Panc1 (cell line): ENCODE measurements at regions of chr3 and their contacts with region 1.

Region 1: GRCh38 chr3:6644070-6644929 is 216.6 kb upstream of the GRM7 start:
- DNase-seq: no peak
- ATAC-seq: no peak
- H3K4me3 ChIP-seq: no peak overlapping the region
- H3K27ac ChIP-seq: no peak overlapping the region
- H3K4me1 ChIP-seq: no peaks in the 10 kb centered on the region
- H3K27me3 ChIP-seq: no peaks in the 10 kb centered on the region
- CTCF ChIP-seq: no peak

Region 2: DNA sequence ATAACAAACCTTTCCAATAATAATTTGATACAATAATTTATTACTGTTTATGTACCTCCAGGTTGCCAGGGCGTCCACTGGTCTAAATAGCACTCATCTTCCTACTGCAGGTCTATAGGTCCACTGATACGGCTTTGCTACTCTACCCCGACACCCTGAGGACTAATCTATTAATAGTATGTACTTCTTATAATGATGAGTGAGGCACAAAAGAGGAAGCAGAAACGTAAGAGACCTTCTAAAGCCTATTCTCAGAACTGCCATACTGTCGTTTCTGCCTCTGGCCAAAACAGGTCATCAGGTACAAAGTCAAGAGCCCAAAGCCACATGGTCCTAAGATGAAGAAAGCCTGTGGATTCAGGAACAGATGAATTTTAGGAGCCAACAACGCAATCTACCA is 53.4 kb after region 1 on chr3:
- CTCF ChIA-PET with region 1: no interaction called
- POLR2A ChIA-PET with region 1: interaction called, 14 read pairs
- in situ Hi-C with region 1: no loop called
- intact Hi-C with region 1: no loop called
- DNase-seq: no peak
- ATAC-seq: no peak
- H3K4me3 ChIP-seq: no peak overlapping the region
- H3K27ac ChIP-seq: no peak overlapping the region
- H3K4me1 ChIP-seq: no peaks in the 10 kb centered on the region
- H3K27me3 ChIP-seq: no peaks in the 10 kb centered on the region
- CTCF ChIP-seq: no peak